A673 (cell line): ENCODE measurements at regions of chr10 and their contacts with region 1.

Region 1: GRCh38 chr10:45076891-45077290 is 76.2 kb downstream of the ZNF22 start:
- DNase-seq: no peak
- H3K4me3 ChIP-seq: no peak overlapping the region
- H3K27ac ChIP-seq: no peak overlapping the region
- H3K4me1 ChIP-seq: peaks cover 21% of the 10 kb centered on the region
- H3K27me3 ChIP-seq: no peaks in the 10 kb centered on the region
- CTCF ChIP-seq: no peak

Region 2: GRCh38 chr10:45008524-45009161 is 68.2 kb before region 1 on chr10:
- CTCF ChIA-PET with region 1: no interaction called
- POLR2A ChIA-PET with region 1: no interaction called
- intact Hi-C with region 1: no loop called
- DNase-seq: peak; percentile 94
- H3K4me3 ChIP-seq: no peak overlapping the region
- H3K27ac ChIP-seq: no peak overlapping the region
- H3K4me1 ChIP-seq: peaks cover 3% of the 10 kb centered on the region
- H3K27me3 ChIP-seq: no peaks in the 10 kb centered on the region
- CTCF ChIP-seq: peak; percentile 89

Region 3: GRCh38 chr10:45229823-45230222 is 152.9 kb after region 1 on chr10:
- CTCF ChIA-PET with region 1: interaction called, 13 read pairs
- POLR2A ChIA-PET with region 1: no interaction called
- intact Hi-C with region 1: no loop called
- DNase-seq: no peak
- H3K4me3 ChIP-seq: no peak overlapping the region
- H3K27ac ChIP-seq: no peak overlapping the region
- H3K4me1 ChIP-seq: no peaks in the 10 kb centered on the region
- H3K27me3 ChIP-seq: peaks cover 13% of the 10 kb centered on the region
- CTCF ChIP-seq: no peak

Region 4: GRCh38 chr10:45660876-45661411 is 584.1 kb after region 1 on chr10:
- CTCF ChIA-PET with region 1: no interaction called
- POLR2A ChIA-PET with region 1: no interaction called
- intact Hi-C with region 1: no loop called
- DNase-seq: no peak
- H3K4me3 ChIP-seq: no peak overlapping the region
- H3K27ac ChIP-seq: no peak overlapping the region
- H3K4me1 ChIP-seq: no peaks in the 10 kb centered on the region
- H3K27me3 ChIP-seq: no peaks in the 10 kb centered on the region
- CTCF ChIP-seq: no peak